HCT116 (cell line): ENCODE measurements at regions of chr18 and their contacts with region 1.

Region 1: DNA sequence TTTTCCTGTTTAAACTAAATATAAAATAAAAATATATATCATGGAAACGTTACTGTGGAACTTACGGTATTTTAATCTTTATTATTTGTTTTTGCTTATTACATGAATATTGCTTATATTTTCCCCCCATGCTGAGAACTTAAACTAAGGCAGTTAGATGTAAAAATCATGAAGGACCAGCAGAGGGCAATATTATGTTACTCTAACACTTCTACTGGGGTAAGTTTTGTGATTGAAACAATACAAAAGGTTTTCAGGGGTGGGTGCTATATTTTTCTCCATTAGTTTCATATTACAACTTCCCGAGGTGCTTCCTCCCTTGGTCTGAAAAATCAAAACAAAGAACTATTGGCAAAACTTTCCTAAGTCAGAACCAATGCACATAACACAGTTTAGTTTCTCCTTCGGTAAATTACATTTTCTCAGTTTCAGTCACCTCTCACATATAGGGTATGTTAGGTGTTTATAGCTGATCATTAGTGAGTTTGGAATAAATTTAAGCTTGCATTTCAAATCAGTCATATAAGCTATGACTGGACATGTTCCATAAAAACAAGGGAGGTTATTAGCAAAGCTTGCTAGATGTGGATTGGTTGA is 54.8 kb downstream of the ZNF407 start:
- DNase-seq: peak; percentile 27
- ATAC-seq: peak; percentile 69
- H3K4me3 ChIP-seq: no peak overlapping the region
- H3K27ac ChIP-seq: no peak overlapping the region
- H3K4me1 ChIP-seq: no peaks in the 10 kb centered on the region
- H3K27me3 ChIP-seq: no peaks in the 10 kb centered on the region
- CTCF ChIP-seq: peak; percentile 44 to 64 (median 59); a peak in 5 of 6 replicates
- POLR2A ChIP-seq: no peak
- RAD21 ChIP-seq: peak; percentile 70

Region 2: GRCh38 chr18:74819433-74820059 is 167.1 kb after region 1 on chr18:
- CTCF ChIA-PET with region 1: interaction called, 3 read pairs
- POLR2A ChIA-PET with region 1: no interaction called
- RAD21 ChIA-PET with region 1: no interaction called
- intact Hi-C with region 1: loop called (anchors 5 kb)
- DNase-seq: no peak
- ATAC-seq: peak; percentile 100
- H3K4me3 ChIP-seq: no peak overlapping the region
- H3K27ac ChIP-seq: no peak overlapping the region
- H3K4me1 ChIP-seq: peaks cover 0 to 6% of the 10 kb centered on the region in 2 experiments; a peak in 1 of 4 replicates
- H3K27me3 ChIP-seq: no peaks in the 10 kb centered on the region
- CTCF ChIP-seq: peak; percentile 56 to 98 (median 96); a peak in 5 of 6 replicates
- POLR2A ChIP-seq: no peak
- RAD21 ChIP-seq: peak; percentile 56

Region 3: DNA sequence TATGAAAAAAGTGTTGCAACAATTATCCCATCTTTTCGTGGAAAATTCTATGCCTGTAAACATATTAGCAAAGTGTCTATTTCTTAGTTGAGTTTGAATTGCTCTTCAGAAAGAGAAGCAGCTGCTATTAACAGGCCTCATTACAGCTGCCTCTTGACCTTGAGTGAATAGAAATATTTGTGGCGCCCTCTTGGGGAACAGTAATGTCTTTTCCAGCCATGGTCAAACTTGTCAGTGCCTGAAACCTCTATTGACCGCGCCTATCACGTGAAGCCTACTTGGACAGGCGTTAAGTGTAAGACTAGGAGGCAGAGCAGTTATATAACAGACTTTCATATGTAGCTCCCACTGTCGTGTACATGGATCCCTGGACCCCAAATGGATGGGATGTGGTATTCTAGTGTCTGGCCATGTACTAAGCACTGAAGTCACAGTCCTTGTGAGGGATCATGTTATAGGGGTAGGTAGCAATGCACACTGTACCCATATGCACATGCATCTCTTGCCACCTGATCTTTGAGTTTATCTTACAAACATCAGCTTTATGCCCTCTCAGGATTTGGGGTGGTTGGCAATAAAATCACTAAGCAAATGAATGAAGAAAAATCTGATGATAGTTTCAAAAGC is 311.4 kb after region 1 on chr18:
- CTCF ChIA-PET with region 1: no interaction called
- POLR2A ChIA-PET with region 1: no interaction called
- RAD21 ChIA-PET with region 1: no interaction called
- intact Hi-C with region 1: loop called (anchors 2 kb)
- DNase-seq: peak; percentile 33
- ATAC-seq: peak; percentile 89
- H3K4me3 ChIP-seq: no peak overlapping the region
- H3K27ac ChIP-seq: no peak overlapping the region
- H3K4me1 ChIP-seq: no peaks in the 10 kb centered on the region
- H3K27me3 ChIP-seq: no peaks in the 10 kb centered on the region
- CTCF ChIP-seq: peak; percentile 51 to 54 (median 54); a peak in 5 of 6 replicates
- POLR2A ChIP-seq: no peak
- RAD21 ChIP-seq: peak; percentile 68

Region 4: GRCh38 chr18:75247611-75248421 is 595.3 kb after region 1 on chr18:
- CTCF ChIA-PET with region 1: no interaction called
- POLR2A ChIA-PET with region 1: no interaction called
- RAD21 ChIA-PET with region 1: no interaction called
- intact Hi-C with region 1: loop called (anchors 5 kb)
- DNase-seq: no peak
- ATAC-seq: no peak
- H3K4me3 ChIP-seq: no peak overlapping the region
- H3K27ac ChIP-seq: no peak overlapping the region
- H3K4me1 ChIP-seq: no peaks in the 10 kb centered on the region
- H3K27me3 ChIP-seq: no peaks in the 10 kb centered on the region
- CTCF ChIP-seq: no peak
- POLR2A ChIP-seq: no peak
- RAD21 ChIP-seq: no peak

Region 5: DNA sequence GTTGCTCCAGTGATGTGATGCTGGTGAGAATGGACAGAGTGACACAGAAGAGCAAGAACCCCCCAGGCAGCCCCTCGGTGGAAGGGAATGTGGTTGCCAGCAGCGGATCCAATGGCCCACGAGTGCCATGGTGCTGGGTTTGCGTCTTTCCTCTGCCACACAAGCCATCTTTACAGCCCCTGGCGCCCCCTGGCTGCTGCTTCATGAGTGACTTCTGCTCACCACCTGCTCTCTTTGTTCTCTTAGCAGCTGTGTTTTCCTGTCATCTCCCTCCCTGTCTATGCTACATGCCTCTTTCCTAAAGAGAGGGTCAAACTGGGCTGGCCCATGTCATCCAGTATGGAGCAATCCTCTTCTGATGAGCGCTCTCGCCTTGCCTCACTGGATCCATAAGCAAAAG is 1075.0 kb after region 1 on chr18:
- CTCF ChIA-PET with region 1: interaction called, 6 read pairs
- POLR2A ChIA-PET with region 1: no interaction called
- RAD21 ChIA-PET with region 1: no interaction called
- intact Hi-C with region 1: loop called (anchors 2 kb)
- DNase-seq: peak; percentile 21
- ATAC-seq: peak; percentile 84
- H3K4me3 ChIP-seq: no peak overlapping the region
- H3K27ac ChIP-seq: no peak overlapping the region
- H3K4me1 ChIP-seq: no peaks in the 10 kb centered on the region
- H3K27me3 ChIP-seq: no peaks in the 10 kb centered on the region
- CTCF ChIP-seq: peak; percentile 40 to 71 (median 67); a peak in 5 of 6 replicates
- POLR2A ChIP-seq: no peak
- RAD21 ChIP-seq: peak; percentile 63

Region 6: GRCh38 chr18:76259096-76259495 is 1606.6 kb after region 1 on chr18:
- CTCF ChIA-PET with region 1: interaction called, 6 read pairs
- POLR2A ChIA-PET with region 1: no interaction called
- RAD21 ChIA-PET with region 1: no interaction called
- intact Hi-C with region 1: loop called (anchors 5 kb)
- DNase-seq: no peak
- ATAC-seq: 0 out of 2 replicates have a peak, but pooled peaks have one; percentile 29
- H3K4me3 ChIP-seq: no peak overlapping the region
- H3K27ac ChIP-seq: no peak overlapping the region
- H3K4me1 ChIP-seq: no peaks in the 10 kb centered on the region
- H3K27me3 ChIP-seq: peaks cover 15% of the 10 kb centered on the region; the same call in 1 of the 2 replicates
- CTCF ChIP-seq: 0 out of 6 replicates have a peak, but pooled peaks of 1 of the 3 experiments have one; percentile 14
- POLR2A ChIP-seq: no peak
- RAD21 ChIP-seq: no peak